Common myeloid progenitor, CD34-positive (primary cell): ENCODE measurements at regions of chr20 and their contacts with region 1.

Region 1: GRCh38 chr20:58870239-58871014 is 17.9 kb downstream of the GNAS start:
- DNase-seq: peak; percentile 25 to 42 (median 36)
- H3K4me3 ChIP-seq: no peak overlapping the region
- H3K27ac ChIP-seq: no peak overlapping the region
- H3K4me1 ChIP-seq: peaks cover 0 to 7% (median 0%) of the 10 kb centered on the region in 4 experiments
- H3K27me3 ChIP-seq: peaks cover 0 to 8% (median 3%) of the 10 kb centered on the region in 5 experiments

Region 2: DNA sequence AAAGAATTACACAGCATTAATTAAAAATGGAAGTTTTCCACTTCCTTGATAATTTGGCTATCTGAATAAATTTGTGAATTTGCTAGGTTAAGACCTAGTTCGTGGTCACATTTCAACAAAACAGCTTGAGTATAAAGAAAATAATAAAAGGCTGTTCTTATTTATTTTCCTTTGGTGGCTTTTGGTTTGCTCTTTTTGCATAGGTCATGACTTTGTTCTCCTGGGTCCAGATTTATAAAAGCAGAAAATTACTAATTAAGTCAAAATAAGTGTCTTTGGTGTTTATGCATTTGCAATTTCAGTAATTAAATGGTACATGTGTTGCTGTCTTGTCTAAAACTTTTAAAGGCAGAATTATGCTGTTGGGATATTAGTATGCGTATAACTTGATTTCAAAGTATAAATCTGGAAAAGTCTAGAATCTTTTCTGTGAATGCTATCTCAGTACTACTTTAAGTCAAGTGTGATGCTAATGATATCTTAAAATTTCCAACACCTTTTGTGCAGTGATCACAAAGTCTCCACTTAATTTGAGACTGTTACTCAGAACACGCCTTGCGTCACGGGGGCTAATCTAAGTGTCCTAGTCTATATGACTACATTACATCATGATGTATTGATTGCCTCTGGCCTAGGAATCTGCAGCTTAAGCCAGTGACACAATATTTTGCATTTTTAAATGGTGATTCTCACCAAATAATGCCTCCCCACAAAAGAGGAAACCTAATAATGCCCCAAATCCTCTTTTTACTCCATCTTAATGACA is 23.1 kb after region 1 on chr20:
- CTCF ChIA-PET with region 1: no interaction called
- POLR2A ChIA-PET with region 1: no interaction called
- DNase-seq: no peak
- H3K4me3 ChIP-seq: peak overlapping the region in 5 of 7 experiments; percentile 73 to 88 (median 78)
- H3K27ac ChIP-seq: peak overlapping the region in 1 of 2 experiments; percentile 97
- H3K4me1 ChIP-seq: peaks cover 29 to 60% (median 48%) of the 10 kb centered on the region in 4 experiments
- H3K27me3 ChIP-seq: no peaks in the 10 kb centered on the region

Region 3: DNA sequence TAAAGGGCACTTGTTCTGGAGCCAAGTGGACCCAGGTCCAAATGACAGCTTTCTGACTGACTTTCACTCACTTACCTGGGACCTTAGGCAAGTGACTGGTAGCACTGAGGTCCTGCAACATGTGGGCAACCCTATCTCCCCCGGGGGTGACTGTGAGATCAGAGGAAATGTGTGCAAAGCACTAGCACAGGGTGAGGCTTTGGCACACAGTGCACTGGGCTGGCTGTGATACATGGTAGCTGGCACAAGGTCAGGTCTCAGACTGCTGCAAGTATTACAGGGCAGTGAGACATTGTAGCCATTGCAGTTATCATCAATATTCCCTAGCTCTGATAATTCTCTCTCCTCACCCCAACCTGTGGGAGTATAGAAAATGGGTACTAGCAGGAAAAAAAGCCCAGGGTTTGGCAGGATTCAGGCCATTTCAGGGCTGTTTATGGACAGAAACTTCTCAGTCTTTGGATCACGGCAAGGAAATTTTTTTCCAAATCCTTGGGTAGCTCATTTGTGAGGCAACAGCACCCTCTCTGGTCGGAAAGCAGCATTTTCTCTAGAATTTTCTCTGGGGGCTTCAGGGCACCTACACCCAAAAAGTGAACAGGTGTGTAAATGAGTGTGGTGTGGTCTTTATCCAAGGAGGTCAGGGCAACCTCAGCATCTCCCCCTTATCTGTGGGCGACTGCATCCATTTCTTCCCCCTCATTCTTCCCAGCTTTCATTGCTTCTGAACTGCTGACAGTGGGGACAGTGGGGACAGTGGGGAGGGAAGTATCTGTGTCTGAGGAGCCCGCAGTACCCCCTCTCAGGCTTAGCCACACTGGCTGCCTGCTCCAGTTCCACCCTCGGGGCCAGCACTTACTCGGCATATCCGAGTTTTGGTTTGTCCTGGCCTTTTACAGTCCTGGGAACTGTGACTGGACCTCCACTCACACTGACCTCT is 585.2 kb after region 1 on chr20:
- CTCF ChIA-PET with region 1: interaction called, 17 read pairs
- POLR2A ChIA-PET with region 1: no interaction called
- DNase-seq: peak; percentile 18 to 52 (median 30)
- H3K4me3 ChIP-seq: no peak overlapping the region
- H3K27ac ChIP-seq: no peak overlapping the region
- H3K4me1 ChIP-seq: peaks cover 0 to 1% (median 0%) of the 10 kb centered on the region in 4 experiments
- H3K27me3 ChIP-seq: peaks cover 0 to 14% (median 7%) of the 10 kb centered on the region in 5 experiments